ENCODE measurements at regions of chr20 and their contacts with region 1.

Region 1: GRCh38 chr20:37178839-37179670 is at the starts of genes MROH8 and RPN2:
- DNase-seq: peak; percentile 98 to 100 (median 99)

Region 2: GRCh38 chr20:37095599-37096414 is 83.2 kb before region 1 on chr20 and contains the start of gene RBL1:
- intact Hi-C with region 1: loop called (anchors 5 kb)
- DNase-seq: peak; percentile 80 to 95 (median 90)